GM12878 (cell line): ENCODE measurements at regions of chrX and their contacts with region 1.

Region 1: DNA sequence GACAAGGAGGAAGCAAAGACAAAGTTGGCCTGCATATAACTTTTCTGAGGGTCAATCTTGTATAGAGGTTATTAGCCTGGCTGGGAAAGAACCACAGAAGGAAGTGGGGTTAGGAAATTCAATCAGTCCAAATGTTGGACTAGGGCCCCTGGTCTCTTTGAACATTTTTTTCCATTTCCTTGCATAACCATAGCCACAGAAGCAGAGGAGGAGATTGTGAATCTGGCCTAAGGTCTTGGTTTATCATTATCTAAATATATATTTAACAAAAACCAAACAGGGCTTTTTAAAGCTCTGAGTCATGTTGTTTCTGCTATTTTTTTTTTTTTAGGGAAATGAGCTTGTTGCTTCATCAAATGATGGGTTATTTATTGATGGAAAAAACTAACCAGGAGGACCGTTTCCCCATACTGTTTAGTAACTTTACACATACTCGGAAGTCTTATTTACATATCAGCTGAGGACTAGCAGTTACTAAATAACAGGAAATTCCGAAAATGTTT is 97.7 kb upstream of the ACSL4 start:
- DNase-seq: no peak
- ATAC-seq: peak; percentile 80
- H3K4me3 ChIP-seq: no peak overlapping the region
- H3K27ac ChIP-seq: no peak overlapping the region
- H3K4me1 ChIP-seq: no peaks in the 10 kb centered on the region
- H3K27me3 ChIP-seq: no peaks in the 10 kb centered on the region
- CTCF ChIP-seq: no peak
- EP300 ChIP-seq: no peak
- POLR2A ChIP-seq: no peak
- RAD21 ChIP-seq: no peak

Region 2: GRCh38 chrX:109643687-109644086 is 187.1 kb before region 1 on chrX:
- CTCF ChIA-PET with region 1: no interaction called
- POLR2A ChIA-PET with region 1: no interaction called
- RAD21 ChIA-PET with region 1: no interaction called
- SMC1A ChIA-PET with region 1: no interaction called
- in situ Hi-C with region 1: no loop called
- intact Hi-C with region 1: no loop called
- DNase-seq: no peak
- ATAC-seq: no peak
- H3K4me3 ChIP-seq: no peak overlapping the region
- H3K27ac ChIP-seq: peak overlapping the region; percentile 6; the same call in 1 of the 2 replicates
- H3K4me1 ChIP-seq: no peaks in the 10 kb centered on the region
- H3K27me3 ChIP-seq: no peaks in the 10 kb centered on the region
- CTCF ChIP-seq: no peak
- EP300 ChIP-seq: no peak
- POLR2A ChIP-seq: no peak
- RAD21 ChIP-seq: no peak

Region 3: GRCh38 chrX:109818976-109819375 is 11.8 kb before region 1 on chrX:
- CTCF ChIA-PET with region 1: interaction called, 7 read pairs
- POLR2A ChIA-PET with region 1: interaction called, 6 read pairs
- RAD21 ChIA-PET with region 1: interaction called, 3 read pairs
- SMC1A ChIA-PET with region 1: interaction called, 14 read pairs
- in situ Hi-C with region 1: no loop called
- intact Hi-C with region 1: no loop called
- DNase-seq: no peak
- ATAC-seq: no peak
- H3K4me3 ChIP-seq: no peak overlapping the region
- H3K27ac ChIP-seq: no peak overlapping the region
- H3K4me1 ChIP-seq: no peaks in the 10 kb centered on the region
- H3K27me3 ChIP-seq: no peaks in the 10 kb centered on the region; a peak in 1 of 4 replicates
- CTCF ChIP-seq: no peak
- EP300 ChIP-seq: no peak
- POLR2A ChIP-seq: no peak
- RAD21 ChIP-seq: no peak

Region 4: DNA sequence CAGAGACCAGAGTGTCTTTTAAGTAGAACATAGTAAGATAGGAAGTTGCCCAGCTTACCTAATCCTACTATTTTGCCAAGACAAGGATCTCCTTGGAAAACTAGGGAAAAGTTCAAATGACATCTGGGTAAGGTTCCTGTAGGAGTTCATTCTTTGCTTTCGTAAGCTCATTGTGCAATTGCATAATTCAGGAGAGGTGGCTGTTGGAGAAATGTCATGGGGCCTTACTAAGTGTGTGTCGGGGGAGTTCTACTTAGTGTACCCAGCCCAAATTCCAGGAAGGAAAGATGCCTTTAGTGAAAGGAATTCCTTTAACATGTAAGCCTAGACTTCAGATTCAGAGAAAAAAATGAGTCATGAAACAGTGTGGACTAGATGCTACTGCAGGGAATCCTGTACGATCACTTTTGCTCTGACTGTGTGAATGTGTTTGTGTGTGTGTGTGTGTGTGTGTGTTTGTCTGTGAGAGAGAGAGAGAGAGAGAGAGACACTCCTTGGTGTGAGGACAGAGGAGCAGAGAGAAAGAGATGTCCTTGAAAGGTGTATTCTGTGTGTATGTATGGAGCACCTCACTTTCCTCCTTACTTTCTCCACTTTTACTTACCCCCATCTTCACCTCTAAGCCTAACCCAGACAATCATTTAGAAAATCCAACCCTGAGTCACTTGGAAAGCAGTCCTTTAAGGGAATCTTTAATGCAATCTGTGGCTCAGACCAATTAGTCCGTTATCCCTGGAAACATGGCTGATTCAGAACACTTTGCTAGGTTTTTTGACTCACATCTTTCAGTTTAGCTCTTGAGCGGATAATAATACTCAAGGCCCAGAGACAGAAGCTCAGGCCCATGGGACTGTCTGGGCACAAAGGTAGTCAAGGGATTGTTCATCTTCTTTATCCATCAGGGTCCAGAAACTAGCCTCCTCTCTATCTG is 16.8 kb after region 1 on chrX:
- CTCF ChIA-PET with region 1: interaction called, 4 read pairs
- POLR2A ChIA-PET with region 1: interaction called, 3 read pairs
- RAD21 ChIA-PET with region 1: interaction called, 17 read pairs
- SMC1A ChIA-PET with region 1: interaction called, 44 read pairs
- in situ Hi-C with region 1: no loop called
- intact Hi-C with region 1: no loop called
- DNase-seq: no peak
- ATAC-seq: no peak
- H3K4me3 ChIP-seq: no peak overlapping the region
- H3K27ac ChIP-seq: no peak overlapping the region
- H3K4me1 ChIP-seq: peaks cover 9% of the 10 kb centered on the region
- H3K27me3 ChIP-seq: no peaks in the 10 kb centered on the region
- CTCF ChIP-seq: no peak
- EP300 ChIP-seq: no peak
- POLR2A ChIP-seq: no peak
- RAD21 ChIP-seq: no peak